WTC11 (cell line): ENCODE measurements at regions of chr19 and their contacts with region 1.

Region 1: GRCh38 chr19:17496337-17496997 is 15.0 kb upstream of the PGLS start:
- DNase-seq: peak; percentile 90
- ATAC-seq: peak; percentile 85
- H3K4me3 Mint-ChIP-seq: peak overlapping the region; percentile 74
- H3K27ac Mint-ChIP-seq: no peak overlapping the region
- H3K4me1 Mint-ChIP-seq: peaks cover 16% of the 10 kb centered on the region
- H3K27me3 Mint-ChIP-seq: peaks cover 23% of the 10 kb centered on the region
- CTCF ChIP-seq: peak; percentile 92

Region 2: DNA sequence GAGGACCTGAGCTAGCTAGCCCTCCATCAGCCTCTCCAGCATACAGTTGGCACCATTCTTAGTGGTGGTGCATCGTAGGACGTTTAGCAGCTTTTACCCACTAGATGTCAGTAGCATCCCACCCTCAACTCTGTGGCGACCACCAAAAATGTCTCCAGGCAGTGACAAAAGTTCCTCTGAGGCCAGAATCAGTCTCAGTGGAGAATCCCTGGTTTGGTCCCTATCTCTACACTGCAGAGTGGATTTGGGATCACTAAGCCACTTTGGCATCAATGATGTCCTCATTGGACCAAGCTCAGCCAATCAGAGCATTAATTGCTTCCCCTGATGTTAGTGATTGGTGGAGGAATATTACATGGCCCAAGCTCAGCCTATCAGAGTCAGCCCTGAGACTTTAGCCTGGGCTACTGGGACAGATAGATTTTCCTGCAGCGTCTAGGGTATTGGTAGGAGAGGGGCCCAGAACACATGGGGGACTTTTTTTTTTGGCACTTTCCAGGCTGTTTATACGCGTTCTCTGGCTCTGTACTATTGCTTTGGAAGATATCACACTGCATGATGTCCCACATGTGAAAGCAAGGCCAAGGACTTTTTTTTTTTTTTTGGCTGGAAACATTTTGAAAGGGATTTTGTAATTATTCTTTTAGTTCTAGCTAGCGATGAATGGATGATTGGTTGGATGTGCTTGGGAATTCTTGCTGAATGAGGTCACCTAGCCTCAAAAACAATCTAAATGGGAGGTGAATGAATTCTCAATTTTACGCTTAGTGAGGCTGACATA is 55.0 kb before region 1 on chr19:
- CTCF ChIA-PET with region 1: interaction called, 16 read pairs
- POLR2A ChIA-PET with region 1: no interaction called
- DNase-seq: peak; percentile 41
- ATAC-seq: peak; percentile 88
- H3K4me3 Mint-ChIP-seq: no peak overlapping the region
- H3K27ac Mint-ChIP-seq: no peak overlapping the region
- H3K4me1 Mint-ChIP-seq: no peaks in the 10 kb centered on the region
- H3K27me3 Mint-ChIP-seq: peaks cover 8% of the 10 kb centered on the region
- CTCF ChIP-seq: no peak; the same call in 1 of the 2 replicates

Region 3: GRCh38 chr19:17470068-17470841 is 26.2 kb before region 1 on chr19 and contains the start of gene SLC27A1:
- CTCF ChIA-PET with region 1: interaction called, 24 read pairs
- POLR2A ChIA-PET with region 1: no interaction called
- DNase-seq: peak; percentile 99
- ATAC-seq: peak; percentile 91
- H3K4me3 Mint-ChIP-seq: peak within 1 kb of the TSS; percentile 93
- H3K27ac Mint-ChIP-seq: peak within 1 kb of the TSS; percentile 98
- H3K4me1 Mint-ChIP-seq: peaks cover 19% of the 10 kb centered on the region
- H3K27me3 Mint-ChIP-seq: peaks cover 49% of the 10 kb centered on the region
- CTCF ChIP-seq: no peak
- total RNA-seq, gene SLC27A1: 8.6 to 12.1 TPM (median 10.1 TPM) in 3 replicates

Region 4: GRCh38 chr19:17530586-17530985 is 34.1 kb after region 1 on chr19:
- CTCF ChIA-PET with region 1: interaction called, 43 read pairs
- POLR2A ChIA-PET with region 1: no interaction called
- DNase-seq: peak; percentile 57
- ATAC-seq: peak; percentile 80
- H3K4me3 Mint-ChIP-seq: no peak overlapping the region
- H3K27ac Mint-ChIP-seq: no peak overlapping the region
- H3K4me1 Mint-ChIP-seq: peaks cover 11% of the 10 kb centered on the region
- H3K27me3 Mint-ChIP-seq: no peaks in the 10 kb centered on the region; the same call in 1 of the 2 replicates
- CTCF ChIP-seq: no peak

Region 5: DNA sequence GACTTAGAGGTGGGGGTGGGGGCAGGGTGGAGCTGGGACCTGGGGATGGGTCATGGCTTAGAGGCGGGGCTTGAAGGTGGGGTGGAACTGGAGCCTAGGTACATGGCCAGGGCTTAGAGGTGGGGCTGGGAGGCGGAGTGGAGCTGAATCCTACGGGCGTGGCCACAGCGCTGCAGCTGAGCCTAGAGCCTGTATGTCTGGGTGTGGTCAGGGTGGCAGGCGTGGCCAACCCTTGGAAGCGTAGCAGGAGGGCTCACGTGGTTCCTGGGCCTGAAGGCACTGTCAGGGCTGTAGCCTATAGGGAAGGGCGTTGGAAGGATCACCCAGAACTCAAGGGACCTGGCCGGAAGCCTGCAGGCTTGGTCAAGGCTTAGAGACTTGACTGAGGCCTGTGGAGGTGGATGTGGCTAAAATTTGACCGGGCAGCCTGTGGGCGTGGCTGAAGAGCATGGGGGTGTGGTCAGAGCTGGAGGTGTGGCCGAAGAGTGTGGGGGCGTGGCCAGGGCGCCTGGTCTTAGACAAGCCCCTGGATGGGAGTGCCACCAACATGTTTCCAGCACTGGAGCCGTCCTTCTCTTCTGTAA is 83.3 kb after region 1 on chr19:
- CTCF ChIA-PET with region 1: interaction called, 47 read pairs
- POLR2A ChIA-PET with region 1: no interaction called
- DNase-seq: peak; percentile 93
- ATAC-seq: peak; percentile 71
- H3K4me3 Mint-ChIP-seq: peak overlapping the region; percentile 60
- H3K27ac Mint-ChIP-seq: peak overlapping the region; percentile 97
- H3K4me1 Mint-ChIP-seq: peaks cover 25% of the 10 kb centered on the region
- H3K27me3 Mint-ChIP-seq: no peaks in the 10 kb centered on the region
- CTCF ChIP-seq: no peak